Activated CD4-positive, alpha-beta T cell treated with anti-CD3 and anti-CD28 coated beads for 36 hours (primary cell): ENCODE measurements at regions of chr2 and their contacts with region 1.

Region 1: GRCh38 chr2:86195055-86195807 is at the start of gene IMMT:
- DNase-seq: peak; percentile 97
- ATAC-seq: peak; percentile 93
- H3K4me3 Mint-ChIP-seq: peak within 1 kb of the TSS; percentile 81
- H3K27ac Mint-ChIP-seq: peak within 1 kb of the TSS; percentile 92
- H3K4me1 Mint-ChIP-seq: peaks cover 44% of the 10 kb centered on the region
- H3K27me3 Mint-ChIP-seq: no peaks in the 10 kb centered on the region
- total RNA-seq, gene IMMT: 172 to 182 TPM

Region 2: GRCh38 chr2:85354286-85355072 is 840.8 kb before region 1 on chr2 and contains the starts of genes ELMOD3 and RETSAT:
- CTCF ChIA-PET with region 1: no interaction called
- POLR2A ChIA-PET with region 1: no interaction called
- intact Hi-C with region 1: loop called in 1 of 2 experiments (anchors 10 kb)
- DNase-seq: peak; percentile 98
- ATAC-seq: peak; percentile 100
- H3K4me3 Mint-ChIP-seq: peak within 1 kb of the TSS; percentile 89
- H3K27ac Mint-ChIP-seq: peak within 1 kb of the TSS; percentile 99
- H3K4me1 Mint-ChIP-seq: peaks cover 34% of the 10 kb centered on the region
- H3K27me3 Mint-ChIP-seq: no peaks in the 10 kb centered on the region
- total RNA-seq, gene ELMOD3: 11.2 to 12.9 TPM
- total RNA-seq, gene RETSAT: 18.1 to 18.7 TPM

Region 3: GRCh38 chr2:85852937-85853498 is 342.2 kb before region 1 on chr2:
- CTCF ChIA-PET with region 1: no interaction called
- POLR2A ChIA-PET with region 1: no interaction called
- intact Hi-C with region 1: loop called in 1 of 2 experiments (anchors 5 kb)
- DNase-seq: peak; percentile 73
- ATAC-seq: peak; percentile 79
- H3K4me3 Mint-ChIP-seq: peak overlapping the region; percentile 71
- H3K27ac Mint-ChIP-seq: peak overlapping the region; percentile 99
- H3K4me1 Mint-ChIP-seq: peaks cover 51% of the 10 kb centered on the region
- H3K27me3 Mint-ChIP-seq: no peaks in the 10 kb centered on the region

Region 4: GRCh38 chr2:86440631-86441391 is 245.6 kb after region 1 on chr2 and contains the start of gene KDM3A:
- CTCF ChIA-PET with region 1: interaction called, 3 read pairs
- POLR2A ChIA-PET with region 1: interaction called, 3 read pairs
- intact Hi-C with region 1: loop called (anchors 1 kb)
- DNase-seq: peak; percentile 100
- ATAC-seq: peak; percentile 88
- H3K4me3 Mint-ChIP-seq: peak within 1 kb of the TSS; percentile 90
- H3K27ac Mint-ChIP-seq: peak within 1 kb of the TSS; percentile 99
- H3K4me1 Mint-ChIP-seq: peaks cover 37% of the 10 kb centered on the region
- H3K27me3 Mint-ChIP-seq: no peaks in the 10 kb centered on the region
- total RNA-seq, gene KDM3A: 68.9 to 82.9 TPM

Region 5: DNA sequence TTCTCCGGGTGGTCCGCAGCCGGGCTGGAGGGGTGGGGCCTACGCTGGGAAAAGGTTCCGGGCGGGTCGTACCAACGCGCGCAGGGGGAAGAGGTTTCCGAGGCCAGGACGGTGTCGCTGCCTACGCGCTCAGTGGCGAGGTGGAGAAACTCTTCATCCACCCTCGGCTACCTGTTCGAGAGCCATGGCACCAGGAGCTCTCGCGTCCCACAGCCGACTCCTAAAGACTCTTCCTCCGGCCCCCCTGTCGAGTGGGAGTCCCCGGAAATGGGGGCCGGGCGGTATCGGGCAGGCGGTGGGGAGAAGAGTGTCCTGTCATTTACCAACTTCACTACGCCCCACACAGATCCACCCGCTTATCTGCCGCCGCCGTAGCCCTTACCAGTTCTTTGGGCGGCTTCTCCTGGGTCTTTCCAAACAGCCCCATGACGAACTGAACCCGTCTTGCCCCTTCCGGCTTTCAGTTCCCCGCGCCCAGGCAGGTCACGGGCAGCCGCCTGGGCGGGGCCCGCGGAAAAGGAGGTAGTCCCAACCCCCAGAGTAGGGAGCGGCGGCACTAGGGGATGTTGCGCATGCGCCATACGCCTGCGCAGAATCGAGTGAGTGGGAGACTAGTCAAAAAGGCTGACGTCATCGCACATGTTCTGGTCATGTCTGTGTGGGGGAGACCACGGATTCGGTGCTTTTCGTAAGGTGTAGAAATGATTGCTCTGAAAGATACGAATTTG is 367.9 kb after region 1 on chr2 and contains the start of gene CHMP3:
- CTCF ChIA-PET with region 1: no interaction called
- POLR2A ChIA-PET with region 1: no interaction called
- intact Hi-C with region 1: loop called in 1 of 2 experiments (anchors 2 kb)
- DNase-seq: peak; percentile 97
- ATAC-seq: peak; percentile 92
- H3K4me3 Mint-ChIP-seq: peak within 1 kb of the TSS; percentile 95
- H3K27ac Mint-ChIP-seq: peak within 1 kb of the TSS; percentile 99
- H3K4me1 Mint-ChIP-seq: peaks cover 30% of the 10 kb centered on the region
- H3K27me3 Mint-ChIP-seq: no peaks in the 10 kb centered on the region
- total RNA-seq, gene CHMP3: 35.0 to 35.8 TPM